ENCODE measurements at regions of chr13 and their contacts with region 1.

Region 1: DNA sequence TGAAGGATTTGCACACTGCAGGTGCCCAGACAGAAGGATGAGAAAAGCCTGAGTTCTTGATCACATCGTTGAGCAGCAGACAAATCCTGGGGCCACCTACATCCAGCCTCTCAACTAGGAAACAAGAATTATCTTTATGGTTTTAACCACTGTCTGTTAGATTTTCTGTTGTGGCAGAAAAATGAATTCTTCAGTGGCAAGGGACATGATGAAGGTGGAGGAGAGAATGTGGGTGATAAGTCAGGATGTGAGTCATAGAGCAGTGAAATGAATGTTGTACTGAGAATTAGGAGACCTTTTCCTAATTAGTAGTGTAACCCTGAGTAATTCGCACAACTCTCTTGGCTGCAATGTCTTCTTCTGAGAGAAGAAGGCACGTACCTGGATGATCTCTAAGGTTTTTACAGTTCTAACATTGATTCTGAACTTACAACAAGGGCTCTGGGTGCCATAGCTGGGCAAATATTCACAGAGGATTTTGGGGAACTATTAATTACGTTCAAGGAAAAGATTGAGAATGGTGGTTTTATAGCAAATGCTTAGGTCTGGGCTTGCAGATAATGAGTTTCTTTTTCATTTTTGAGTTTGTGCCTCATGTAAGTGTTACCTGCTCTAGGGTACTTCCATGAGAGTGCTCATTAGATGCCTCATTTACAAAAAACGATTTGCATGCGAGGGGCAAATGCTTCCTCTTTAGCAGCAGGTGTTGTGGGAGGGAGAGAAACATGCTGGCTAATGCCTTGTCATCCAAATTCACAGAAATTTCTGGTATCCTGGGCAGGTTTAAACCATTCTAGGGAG is 111.0 kb upstream of the KL start:
- DNase-seq: no peak
- H3K4me3 Mint-ChIP-seq: peak overlapping the region; percentile 69
- H3K27ac Mint-ChIP-seq: peak overlapping the region; percentile 83
- H3K4me1 Mint-ChIP-seq: peaks cover 32% of the 10 kb centered on the region
- H3K27me3 Mint-ChIP-seq: peaks cover 4% of the 10 kb centered on the region

Region 2: GRCh38 chr13:32538621-32539246 is 366.5 kb before region 1 on chr13 and contains the start of gene N4BP2L2:
- intact Hi-C with region 1: loop called (anchors 2 kb)
- DNase-seq: peak; percentile 88
- H3K4me3 Mint-ChIP-seq: peak within 1 kb of the TSS; percentile 96
- H3K27ac Mint-ChIP-seq: peak within 1 kb of the TSS; percentile 99
- H3K4me1 Mint-ChIP-seq: peaks cover 46% of the 10 kb centered on the region
- H3K27me3 Mint-ChIP-seq: peaks cover 8% of the 10 kb centered on the region
- total RNA-seq, gene N4BP2L2: 87.1 and 92.8 TPM in 2 replicates

Region 3: DNA sequence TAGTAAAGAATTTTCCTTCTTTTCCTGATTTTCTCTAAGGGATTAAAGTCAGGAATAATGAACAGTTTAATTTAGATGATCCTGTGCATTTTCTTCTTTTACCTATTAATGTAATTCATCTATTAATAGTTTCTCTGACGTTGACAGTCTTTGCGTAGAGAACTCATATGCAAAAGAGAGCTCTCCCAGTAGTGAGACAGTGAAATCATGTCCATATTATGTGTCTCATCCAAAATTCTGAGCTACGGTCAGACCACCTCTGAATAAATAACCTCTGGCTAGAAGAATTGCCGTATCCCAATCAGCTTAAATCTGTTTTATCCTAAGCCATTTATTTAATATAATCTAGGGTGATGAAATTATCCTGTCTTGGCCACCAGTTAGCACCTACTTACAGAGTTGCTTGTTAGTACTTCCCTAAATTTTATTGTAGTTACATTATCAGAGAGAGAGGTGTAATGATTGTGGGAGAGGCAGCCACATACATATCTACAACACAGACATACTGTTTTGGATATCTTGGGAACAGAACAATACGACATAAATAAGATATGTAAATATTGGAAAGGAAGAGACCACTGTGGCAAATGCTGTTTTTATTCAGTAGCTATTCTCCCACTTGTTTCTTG is 288.3 kb before region 1 on chr13:
- intact Hi-C with region 1: no loop called
- DNase-seq: no peak
- H3K4me3 Mint-ChIP-seq: no peak overlapping the region
- H3K27ac Mint-ChIP-seq: no peak overlapping the region
- H3K4me1 Mint-ChIP-seq: peaks cover 5% of the 10 kb centered on the region
- H3K27me3 Mint-ChIP-seq: no peaks in the 10 kb centered on the region

Region 4: GRCh38 chr13:32791545-32792172 is 113.6 kb before region 1 on chr13:
- intact Hi-C with region 1: loop called (anchors 2 kb)
- DNase-seq: peak; percentile 33
- H3K4me3 Mint-ChIP-seq: peak overlapping the region; percentile 50
- H3K27ac Mint-ChIP-seq: peak overlapping the region; percentile 46
- H3K4me1 Mint-ChIP-seq: peaks cover 33% of the 10 kb centered on the region
- H3K27me3 Mint-ChIP-seq: no peaks in the 10 kb centered on the region

Region 5: DNA sequence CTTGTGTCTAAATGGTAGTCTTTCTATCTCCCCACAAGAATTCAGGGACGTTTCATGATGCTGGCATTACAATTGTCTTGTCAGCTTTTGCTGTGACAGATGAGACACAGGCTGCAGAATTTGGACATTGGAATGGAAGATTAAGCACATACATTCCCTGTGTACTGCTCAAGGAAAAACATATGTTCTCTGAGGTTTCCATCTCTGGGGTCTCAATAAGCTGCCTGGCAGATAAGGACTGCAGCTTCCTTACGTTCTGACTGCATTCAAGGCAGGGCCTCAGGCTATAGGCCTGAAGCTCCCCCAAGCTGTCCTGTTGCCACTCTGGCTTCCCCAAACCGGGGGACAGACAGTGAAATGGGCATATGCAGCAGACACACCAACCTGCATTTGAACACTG is 19.6 kb after region 1 on chr13:
- intact Hi-C with region 1: no loop called
- DNase-seq: no peak
- H3K4me3 Mint-ChIP-seq: no peak overlapping the region
- H3K27ac Mint-ChIP-seq: no peak overlapping the region
- H3K4me1 Mint-ChIP-seq: no peaks in the 10 kb centered on the region
- H3K27me3 Mint-ChIP-seq: peaks cover 11% of the 10 kb centered on the region

Region 6: DNA sequence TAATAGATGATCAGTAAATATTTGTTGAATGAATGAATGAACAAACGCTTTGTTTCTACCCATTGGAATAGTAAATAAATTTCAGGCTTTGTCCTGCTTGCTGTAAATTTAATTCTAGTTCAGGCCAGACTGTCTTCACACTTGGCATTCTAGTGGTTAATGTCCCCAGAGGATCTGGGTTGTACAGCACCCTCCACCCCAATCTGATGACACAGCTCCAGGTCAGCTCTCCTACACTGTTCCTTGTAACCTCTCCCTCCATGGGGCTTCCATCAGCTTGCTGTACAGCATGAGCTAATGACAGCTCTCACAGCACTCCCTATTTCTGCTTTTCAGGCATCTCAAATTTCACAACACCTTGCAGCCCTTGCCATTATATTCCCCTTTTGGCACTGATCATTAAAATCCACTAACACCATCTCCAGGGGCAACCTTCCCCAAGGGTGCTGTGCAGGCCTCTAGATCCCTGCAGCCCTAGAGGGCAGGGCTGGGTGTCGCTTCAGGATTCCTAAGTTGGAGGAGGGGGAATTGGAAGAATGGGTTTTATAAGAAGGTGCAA is 98.3 kb after region 1 on chr13:
- intact Hi-C with region 1: no loop called
- DNase-seq: no peak
- H3K4me3 Mint-ChIP-seq: no peak overlapping the region
- H3K27ac Mint-ChIP-seq: no peak overlapping the region
- H3K4me1 Mint-ChIP-seq: peaks cover 7% of the 10 kb centered on the region
- H3K27me3 Mint-ChIP-seq: no peaks in the 10 kb centered on the region

Region 7: DNA sequence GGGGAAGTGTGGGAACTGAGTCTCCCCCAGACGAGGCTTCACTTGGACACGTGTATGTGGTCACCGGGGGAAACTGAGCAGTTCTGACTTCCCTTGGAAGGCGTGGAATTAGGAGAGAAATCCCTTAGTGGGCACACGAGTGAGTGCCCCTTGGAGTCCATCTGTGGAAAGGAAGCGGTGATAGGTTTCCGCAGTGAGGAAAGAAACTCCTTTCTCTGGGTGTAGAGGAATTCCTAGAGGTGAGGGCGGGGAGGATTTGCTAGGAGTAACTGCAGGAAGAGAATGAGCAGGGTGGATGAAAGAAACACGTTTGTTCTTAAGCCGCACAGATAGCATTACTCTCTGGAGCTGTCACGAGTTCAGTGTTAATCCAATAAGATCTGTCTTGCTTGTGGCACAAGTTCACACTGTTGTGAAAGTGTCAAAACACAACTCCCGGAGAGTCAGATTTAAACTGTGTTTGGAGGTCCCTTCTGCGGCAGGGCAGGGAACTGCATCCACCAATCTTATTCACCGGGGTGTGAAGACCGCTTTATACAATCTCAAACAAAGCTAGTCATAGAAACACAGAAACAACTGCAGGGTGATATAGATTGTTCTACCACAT is 112.2 kb after region 1 on chr13:
- intact Hi-C with region 1: loop called (anchors 2 kb)
- DNase-seq: peak; percentile 29
- H3K4me3 Mint-ChIP-seq: peak overlapping the region; percentile 78
- H3K27ac Mint-ChIP-seq: peak overlapping the region; percentile 41
- H3K4me1 Mint-ChIP-seq: peaks cover 21% of the 10 kb centered on the region
- H3K27me3 Mint-ChIP-seq: peaks cover 56% of the 10 kb centered on the region

Region 8: DNA sequence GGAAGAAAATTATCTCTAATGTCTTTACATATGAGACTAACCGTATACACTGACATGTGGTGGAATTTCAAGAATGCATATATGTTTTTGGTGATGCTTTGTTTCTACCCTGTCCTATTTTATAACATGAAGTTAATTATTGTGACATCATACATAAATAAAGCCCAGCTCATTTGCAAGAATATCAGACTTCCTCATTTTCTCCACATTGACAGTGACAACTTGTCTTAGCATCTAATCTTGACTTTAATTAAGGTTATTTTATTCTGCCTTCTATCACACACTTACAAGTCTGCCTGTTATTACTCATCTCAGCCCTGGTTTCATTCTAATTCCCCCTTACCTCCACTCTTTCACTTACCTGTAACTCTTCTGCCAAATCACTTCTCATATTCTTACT is 520.9 kb after region 1 on chr13:
- intact Hi-C with region 1: no loop called
- DNase-seq: no peak
- H3K4me3 Mint-ChIP-seq: no peak overlapping the region
- H3K27ac Mint-ChIP-seq: no peak overlapping the region
- H3K4me1 Mint-ChIP-seq: no peaks in the 10 kb centered on the region
- H3K27me3 Mint-ChIP-seq: no peaks in the 10 kb centered on the region

Region 9: DNA sequence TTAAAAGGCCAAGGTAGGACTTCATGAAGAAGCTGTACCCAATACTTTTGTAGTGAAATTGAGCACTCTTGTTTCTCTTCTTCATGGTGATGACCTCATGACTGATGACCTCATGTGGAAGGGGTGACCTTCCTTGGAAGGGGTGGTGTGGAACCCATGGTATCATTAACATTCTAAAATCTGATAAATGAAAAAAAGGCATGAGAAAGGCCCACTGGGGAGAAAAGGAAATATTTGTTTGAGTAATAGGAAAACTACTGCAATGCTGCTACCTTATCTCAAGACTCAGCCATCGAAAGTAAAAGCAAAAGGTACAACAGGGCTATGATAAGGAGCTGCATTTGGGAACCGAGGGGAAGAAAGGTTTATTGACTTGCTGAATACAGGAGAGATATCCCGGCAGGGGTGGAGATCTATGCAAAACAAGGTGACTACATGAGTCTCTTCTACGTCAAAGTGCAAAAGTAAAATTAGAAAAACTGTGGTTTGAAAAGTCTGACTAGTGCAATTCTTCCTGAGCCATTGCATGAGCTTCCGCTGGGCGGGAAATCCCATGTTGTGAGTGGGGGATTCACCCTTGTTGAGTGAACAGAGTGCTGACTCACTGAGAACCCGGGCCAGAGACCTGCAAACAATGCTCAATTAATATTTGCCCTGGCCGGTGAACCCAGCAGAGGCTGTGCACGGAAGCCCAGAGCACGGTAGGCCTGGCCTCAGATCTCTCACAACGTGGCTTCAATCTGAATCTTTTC is 773.8 kb after region 1 on chr13:
- intact Hi-C with region 1: loop called (anchors 2 kb)
- DNase-seq: peak; percentile 71
- H3K4me3 Mint-ChIP-seq: peak overlapping the region; percentile 73
- H3K27ac Mint-ChIP-seq: peak overlapping the region; percentile 91
- H3K4me1 Mint-ChIP-seq: peaks cover 36% of the 10 kb centered on the region
- H3K27me3 Mint-ChIP-seq: peaks cover 2% of the 10 kb centered on the region